CD8-positive, alpha-beta T cell (primary cell): ENCODE measurements at regions of chr2 and their contacts with region 1.

Region 1: GRCh38 chr2:42810121-42810970 is 18.0 kb upstream of the HAAO start:
- DNase-seq: peak; percentile 94 to 99 (median 95)
- ATAC-seq: peak; percentile 78
- H3K4me3 ChIP-seq: peak overlapping the region; percentile 94 to 99
- H3K4me3 Mint-ChIP-seq: peak overlapping the region; percentile 98
- H3K27ac ChIP-seq: peak overlapping the region; percentile 94 to 96
- H3K27ac Mint-ChIP-seq: peak overlapping the region; percentile 97
- H3K4me1 ChIP-seq: peaks cover 7% of the 10 kb centered on the region
- H3K4me1 Mint-ChIP-seq: peaks cover 23% of the 10 kb centered on the region
- H3K27me3 ChIP-seq: no peaks in the 10 kb centered on the region
- H3K27me3 Mint-ChIP-seq: no peaks in the 10 kb centered on the region
- CTCF ChIP-seq: no peak

Region 2: DNA sequence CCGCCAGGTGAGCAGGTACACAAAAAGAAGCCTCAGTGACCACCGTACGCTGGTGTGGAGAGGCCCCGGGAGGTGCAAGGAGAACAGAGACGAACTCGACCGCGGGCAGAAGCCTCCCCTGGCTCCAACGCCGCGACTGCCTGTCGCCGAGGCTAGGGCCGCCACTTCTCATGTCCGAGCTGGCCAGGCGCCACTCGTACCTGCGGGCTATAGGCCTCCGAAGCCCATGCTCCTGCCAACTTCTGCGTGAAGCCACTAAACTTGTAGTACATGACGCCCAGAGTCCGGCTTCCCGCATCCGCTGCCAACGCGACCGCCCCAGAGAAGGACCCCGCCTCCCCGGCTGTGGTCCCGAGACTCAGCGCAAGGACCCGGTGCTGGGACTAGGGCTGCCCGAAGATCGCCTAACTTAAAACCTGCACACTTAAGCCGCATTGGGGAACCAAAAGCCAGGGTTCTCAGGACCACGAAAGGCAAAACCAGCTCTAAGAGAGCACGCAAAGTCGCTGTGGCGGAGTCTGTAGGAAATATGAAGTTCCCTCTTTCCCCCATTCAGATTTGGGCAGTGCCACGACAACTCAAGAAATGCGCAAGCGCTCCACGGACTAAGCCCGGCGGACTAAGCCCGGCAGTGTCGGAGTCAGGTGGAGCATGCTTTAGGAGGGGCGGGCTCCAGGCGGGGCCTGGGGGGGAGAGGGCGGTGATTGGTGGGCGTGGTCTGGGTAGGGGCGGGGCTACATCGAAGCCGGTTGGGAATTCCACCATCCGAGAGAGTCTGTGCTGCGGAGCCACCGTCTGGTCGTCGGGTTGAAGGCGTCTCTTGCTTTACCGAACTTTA is 449.2 kb before region 1 on chr2 and contains the start of gene COX7A2L:
- CTCF ChIA-PET with region 1: interaction called, 3 read pairs
- POLR2A ChIA-PET with region 1: interaction called, 17 read pairs
- intact Hi-C with region 1: loop called (anchors 1 to 5 kb)
- DNase-seq: peak; percentile 92 to 98 (median 96)
- ATAC-seq: peak; percentile 94
- H3K4me3 ChIP-seq: peak within 1 kb of the TSS; percentile 89 to 96
- H3K4me3 Mint-ChIP-seq: peak within 1 kb of the TSS; percentile 86
- H3K27ac ChIP-seq: peak within 1 kb of the TSS; percentile 85 to 96
- H3K27ac Mint-ChIP-seq: peak within 1 kb of the TSS; percentile 99
- H3K4me1 ChIP-seq: peaks cover 33% of the 10 kb centered on the region
- H3K4me1 Mint-ChIP-seq: peaks cover 54% of the 10 kb centered on the region
- H3K27me3 ChIP-seq: no peaks in the 10 kb centered on the region
- H3K27me3 Mint-ChIP-seq: no peaks in the 10 kb centered on the region
- CTCF ChIP-seq: no peak
- total RNA-seq, gene COX7A2L: 56.9 to 60.8 TPM

Region 3: DNA sequence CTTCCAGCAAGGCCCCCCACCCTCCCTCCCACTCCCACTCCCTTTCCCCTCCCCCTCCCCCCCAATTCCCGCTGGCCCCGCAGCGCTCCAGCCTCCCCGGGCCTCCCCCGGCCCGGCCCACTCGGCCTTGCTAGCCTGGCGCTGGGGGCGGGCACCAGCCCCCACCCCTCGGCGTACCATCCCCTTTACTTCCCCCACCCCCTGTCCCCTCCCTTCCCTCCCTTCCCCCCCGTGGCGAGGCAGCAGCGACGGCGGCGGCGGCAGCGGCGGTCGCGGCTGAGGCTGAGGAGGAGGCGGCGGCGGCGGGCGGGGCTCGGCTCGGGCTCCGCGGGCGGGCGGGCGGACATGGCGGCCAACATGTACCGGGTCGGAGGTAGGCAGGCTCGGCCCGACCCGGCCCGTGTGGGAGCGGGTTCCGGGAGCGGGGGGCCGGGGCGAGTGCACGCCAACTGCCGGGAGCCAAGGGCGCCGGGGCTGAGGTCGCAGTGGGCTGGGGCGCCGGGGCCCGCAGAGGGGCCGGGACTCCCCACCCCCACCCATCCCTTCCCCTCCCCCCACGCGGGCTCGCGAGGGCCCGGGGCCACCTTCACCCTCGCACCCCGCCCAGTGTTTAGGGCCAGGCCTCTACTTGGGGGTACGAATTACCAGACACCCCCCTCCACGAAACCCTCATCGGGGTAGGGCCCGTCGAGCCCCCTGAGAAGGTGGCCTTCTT is 241.8 kb before region 1 on chr2 and contains the start of gene MTA3:
- CTCF ChIA-PET with region 1: no interaction called
- POLR2A ChIA-PET with region 1: no interaction called
- intact Hi-C with region 1: loop called (anchors 5 to 10 kb)
- DNase-seq: peak; percentile 37 to 82 (median 66)
- ATAC-seq: peak; percentile 69
- H3K4me3 ChIP-seq: peak within 1 kb of the TSS; percentile 63 to 65
- H3K4me3 Mint-ChIP-seq: peak within 1 kb of the TSS; percentile 90
- H3K27ac ChIP-seq: peak within 1 kb of the TSS in 1 of 2 experiments; percentile 3
- H3K27ac Mint-ChIP-seq: peak within 1 kb of the TSS; percentile 92
- H3K4me1 ChIP-seq: peaks cover 37% of the 10 kb centered on the region
- H3K4me1 Mint-ChIP-seq: peaks cover 46% of the 10 kb centered on the region
- H3K27me3 ChIP-seq: no peaks in the 10 kb centered on the region
- H3K27me3 Mint-ChIP-seq: no peaks in the 10 kb centered on the region
- CTCF ChIP-seq: no peak
- total RNA-seq, gene MTA3: 17.6 to 18.4 TPM

Region 4: DNA sequence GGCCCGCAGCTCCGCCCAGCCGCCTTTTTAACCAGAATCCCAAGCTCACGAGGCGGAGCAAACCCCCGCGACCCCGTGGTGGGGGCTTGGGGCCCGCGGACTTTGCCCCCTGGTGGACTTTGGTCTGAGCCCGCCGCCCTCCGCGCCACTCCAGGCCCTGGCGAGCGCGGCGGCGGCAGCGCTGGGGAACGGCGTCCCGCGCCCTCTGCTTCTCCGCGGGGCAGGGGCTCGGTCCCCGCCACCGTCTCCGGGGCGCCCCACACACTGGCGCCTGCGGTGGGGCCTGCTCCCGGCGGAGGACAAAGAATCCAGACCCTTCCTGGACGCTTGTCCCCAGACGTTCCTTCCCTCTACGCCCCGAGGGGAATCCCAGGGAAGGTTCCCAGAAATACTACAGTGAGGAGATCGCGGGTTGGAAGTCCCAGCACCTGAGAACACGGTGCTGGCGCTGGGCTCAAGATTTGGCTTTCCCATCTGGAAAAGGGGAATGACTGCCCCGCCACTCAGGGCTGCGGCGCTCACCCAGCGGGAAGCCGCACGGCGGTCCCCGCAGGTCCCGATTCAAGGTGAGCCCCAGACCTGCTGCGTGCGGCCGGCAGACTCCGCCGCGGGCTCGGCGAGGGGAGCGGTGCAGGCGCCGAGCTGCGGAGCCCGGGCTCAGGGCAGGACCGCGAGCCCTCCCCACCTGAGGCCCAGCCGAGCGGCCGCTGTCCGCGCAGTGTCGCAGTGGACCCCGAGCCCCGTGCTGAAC is 17.6 kb before region 1 on chr2 and contains the start of gene HAAO:
- CTCF ChIA-PET with region 1: interaction called, 4 read pairs
- POLR2A ChIA-PET with region 1: interaction called, 23 read pairs
- intact Hi-C with region 1: loop called in 1 of 2 experiments (anchors 2 kb)
- DNase-seq: peak in 4 of 9 experiments; percentile 13 to 56 (median 27)
- ATAC-seq: peak; percentile 54
- H3K4me3 ChIP-seq: peak within 1 kb of the TSS; percentile 39 to 55
- H3K4me3 Mint-ChIP-seq: peak within 1 kb of the TSS; percentile 77
- H3K27ac ChIP-seq: no peak within 1 kb of the TSS
- H3K27ac Mint-ChIP-seq: peak within 1 kb of the TSS; percentile 72
- H3K4me1 ChIP-seq: peaks cover 15% of the 10 kb centered on the region
- H3K4me1 Mint-ChIP-seq: peaks cover 36% of the 10 kb centered on the region
- H3K27me3 ChIP-seq: peaks cover 5 to 7% of the 10 kb centered on the region in 2 experiments
- H3K27me3 Mint-ChIP-seq: peaks cover 31% of the 10 kb centered on the region
- CTCF ChIP-seq: no peak
- total RNA-seq, gene HAAO: not detected

Region 5: GRCh38 chr2:43169987-43170386 is 359.6 kb after region 1 on chr2:
- CTCF ChIA-PET with region 1: no interaction called
- POLR2A ChIA-PET with region 1: interaction called, 3 read pairs
- intact Hi-C with region 1: loop called in 1 of 2 experiments (anchors 5 kb)
- DNase-seq: peak; percentile 54 to 86 (median 72)
- ATAC-seq: peak; percentile 15
- H3K4me3 ChIP-seq: peak overlapping the region; percentile 27 to 32
- H3K4me3 Mint-ChIP-seq: peak overlapping the region; percentile 86
- H3K27ac ChIP-seq: peak overlapping the region; percentile 47 to 67
- H3K27ac Mint-ChIP-seq: peak overlapping the region; percentile 99
- H3K4me1 ChIP-seq: peaks cover 70% of the 10 kb centered on the region
- H3K4me1 Mint-ChIP-seq: peaks cover 82% of the 10 kb centered on the region
- H3K27me3 ChIP-seq: no peaks in the 10 kb centered on the region
- H3K27me3 Mint-ChIP-seq: no peaks in the 10 kb centered on the region
- CTCF ChIP-seq: peak; percentile 59

Region 6: GRCh38 chr2:43595603-43596412 is 785.5 kb after region 1 on chr2 and contains the start of gene THADA:
- CTCF ChIA-PET with region 1: no interaction called
- POLR2A ChIA-PET with region 1: interaction called, 15 read pairs
- intact Hi-C with region 1: loop called (anchors 1 to 5 kb)
- DNase-seq: peak; percentile 91 to 98 (median 96)
- ATAC-seq: peak; percentile 91
- H3K4me3 ChIP-seq: peak within 1 kb of the TSS; percentile 74 to 90
- H3K4me3 Mint-ChIP-seq: peak within 1 kb of the TSS; percentile 92
- H3K27ac ChIP-seq: peak within 1 kb of the TSS; percentile 86 to 87
- H3K27ac Mint-ChIP-seq: peak within 1 kb of the TSS; percentile 97
- H3K4me1 ChIP-seq: peaks cover 10% of the 10 kb centered on the region
- H3K4me1 Mint-ChIP-seq: peaks cover 33% of the 10 kb centered on the region
- H3K27me3 ChIP-seq: no peaks in the 10 kb centered on the region
- H3K27me3 Mint-ChIP-seq: no peaks in the 10 kb centered on the region
- CTCF ChIP-seq: no peak
- total RNA-seq, gene THADA: 28.5 to 28.6 TPM